Activated T-helper 1 cell treated with anti-CD3 and anti-CD28 coated beads, Interleukin-12 subunit alpha, Interleukin-12 subunit beta, Interleukin-2, Interleukin-4 antibody, amounts not matched to agents 30 ng/mL and 10 ng/mL and 1 ng/mL, durations not matched to agents 14 hours and 24 hours and 36 hours (primary cell): ENCODE measurements at regions of chr2 and their contacts with region 1.

Region 1: GRCh38 chr2:130342533-130343275 is at the start of gene IMP4:
- DNase-seq: peak; percentile 95
- H3K4me3 Mint-ChIP-seq: peak within 1 kb of the TSS; percentile 100
- H3K27ac Mint-ChIP-seq: peak within 1 kb of the TSS; percentile 97
- H3K4me1 Mint-ChIP-seq: peaks cover 21% of the 10 kb centered on the region
- H3K27me3 Mint-ChIP-seq: no peaks in the 10 kb centered on the region
- total RNA-seq, gene IMP4: 169 and 184 TPM in 2 replicates

Region 2: GRCh38 chr2:129866391-129866790 is 476.3 kb before region 1 on chr2:
- intact Hi-C with region 1: no loop called
- DNase-seq: no peak
- H3K4me3 Mint-ChIP-seq: no peak overlapping the region
- H3K27ac Mint-ChIP-seq: no peak overlapping the region
- H3K4me1 Mint-ChIP-seq: no peaks in the 10 kb centered on the region
- H3K27me3 Mint-ChIP-seq: no peaks in the 10 kb centered on the region

Region 3: GRCh38 chr2:129877289-129877779 is 465.4 kb before region 1 on chr2:
- intact Hi-C with region 1: loop called (anchors 1 kb)
- DNase-seq: peak; percentile 53
- H3K4me3 Mint-ChIP-seq: peak overlapping the region; percentile 88
- H3K27ac Mint-ChIP-seq: peak overlapping the region; percentile 74
- H3K4me1 Mint-ChIP-seq: peaks cover 9% of the 10 kb centered on the region
- H3K27me3 Mint-ChIP-seq: peaks cover 4% of the 10 kb centered on the region

Region 4: DNA sequence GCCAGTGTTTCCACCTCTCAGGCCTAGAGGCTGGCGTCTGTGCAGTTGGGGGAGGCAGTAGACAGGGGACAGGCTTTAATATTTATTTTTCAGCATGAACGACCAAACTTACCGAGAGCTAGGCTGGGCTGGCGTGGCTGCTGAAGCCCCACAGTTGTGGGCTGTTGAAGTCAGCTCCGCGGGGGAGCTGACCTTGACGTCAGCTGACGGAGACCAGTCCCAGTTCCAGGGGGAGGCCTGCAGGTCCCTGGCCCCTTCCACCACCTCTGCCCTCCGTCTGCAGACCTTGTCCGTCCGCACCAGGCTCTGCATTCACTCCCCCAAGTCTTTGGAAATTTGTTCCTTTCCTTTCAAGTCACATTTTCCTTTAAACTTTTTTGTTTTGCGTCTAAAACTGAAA is 111.0 kb before region 1 on chr2:
- intact Hi-C with region 1: loop called (anchors 1 kb)
- DNase-seq: no peak
- H3K4me3 Mint-ChIP-seq: no peak overlapping the region
- H3K27ac Mint-ChIP-seq: no peak overlapping the region
- H3K4me1 Mint-ChIP-seq: no peaks in the 10 kb centered on the region
- H3K27me3 Mint-ChIP-seq: peaks cover 3% of the 10 kb centered on the region

Region 5: DNA sequence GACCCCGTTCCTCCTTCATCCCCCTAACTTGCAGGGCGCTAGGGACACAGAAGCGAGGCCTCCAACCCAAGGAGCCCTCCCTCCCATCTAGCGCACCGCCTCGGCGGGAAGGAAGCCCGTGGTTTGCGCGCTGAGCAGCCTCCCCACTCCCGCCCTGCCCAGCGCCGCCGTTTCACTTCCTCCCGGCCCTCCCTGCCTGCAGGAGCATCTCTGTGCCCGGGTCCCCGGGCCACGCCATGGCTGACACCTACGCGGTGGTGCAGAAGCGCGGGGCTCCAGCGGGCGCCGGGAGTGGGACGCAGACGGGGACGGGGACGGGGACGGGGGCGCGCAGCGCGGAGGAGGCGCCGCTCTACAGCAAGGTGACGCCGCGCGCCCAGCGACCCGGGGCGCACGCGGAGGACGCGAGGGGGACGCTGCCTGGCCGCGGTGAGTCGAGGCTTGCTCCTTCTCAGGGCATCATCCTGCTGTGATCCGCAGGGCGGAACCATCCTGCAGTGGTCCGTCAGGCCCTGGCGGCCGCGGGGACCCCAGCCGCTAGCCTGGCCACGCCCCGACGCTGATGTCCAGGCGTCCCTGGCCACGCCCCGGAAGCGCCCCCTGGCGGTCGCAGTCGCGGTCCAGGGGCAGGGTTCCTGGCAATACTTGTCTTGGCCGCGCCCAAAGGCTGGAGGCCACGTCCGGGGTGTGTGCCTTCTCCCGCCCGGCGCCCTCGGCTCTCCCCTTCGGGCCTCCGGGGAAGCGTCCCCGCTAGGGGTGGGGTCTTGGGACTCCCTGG is 29.5 kb after region 1 on chr2:
- intact Hi-C with region 1: loop called (anchors 1 kb)
- DNase-seq: peak; percentile 78
- H3K4me3 Mint-ChIP-seq: peak overlapping the region; percentile 96
- H3K27ac Mint-ChIP-seq: peak overlapping the region; percentile 96
- H3K4me1 Mint-ChIP-seq: peaks cover 59% of the 10 kb centered on the region
- H3K27me3 Mint-ChIP-seq: peaks cover 4% of the 10 kb centered on the region

Region 6: DNA sequence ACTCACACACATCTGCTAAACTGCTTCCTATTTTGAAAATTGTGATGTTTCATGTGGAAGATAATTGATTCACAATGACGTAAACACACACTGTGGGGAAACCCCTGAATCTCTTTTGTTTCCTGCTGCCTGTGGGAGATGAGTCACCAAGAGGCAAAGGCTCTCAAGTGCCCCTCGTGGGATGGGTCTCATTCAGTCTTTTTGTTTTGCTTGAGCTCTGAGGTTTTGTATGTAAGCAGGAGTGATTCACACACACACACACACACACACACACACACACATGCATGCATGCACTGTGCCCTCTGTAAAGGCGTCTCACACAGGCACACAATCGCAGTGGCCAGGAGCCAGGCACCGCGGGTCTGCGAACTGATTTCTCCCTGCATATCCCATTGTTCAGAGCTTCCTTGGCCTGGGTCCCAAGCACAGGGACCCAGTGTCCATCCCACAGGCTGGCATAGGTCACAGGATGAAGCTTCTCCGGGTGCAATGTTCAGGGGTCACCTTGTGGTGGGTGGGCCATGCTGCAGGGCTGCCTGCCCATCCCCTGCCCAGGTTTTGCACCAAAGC is 481.9 kb after region 1 on chr2:
- intact Hi-C with region 1: loop called (anchors 1 kb)
- DNase-seq: peak; percentile 72
- H3K4me3 Mint-ChIP-seq: peak overlapping the region; percentile 63
- H3K27ac Mint-ChIP-seq: peak overlapping the region; percentile 89
- H3K4me1 Mint-ChIP-seq: peaks cover 15% of the 10 kb centered on the region
- H3K27me3 Mint-ChIP-seq: peaks cover 20% of the 10 kb centered on the region

Region 7: GRCh38 chr2:131366643-131367042 is 1023.9 kb after region 1 on chr2:
- intact Hi-C with region 1: no loop called
- DNase-seq: no peak
- H3K4me3 Mint-ChIP-seq: no peak overlapping the region
- H3K27ac Mint-ChIP-seq: no peak overlapping the region
- H3K4me1 Mint-ChIP-seq: peaks cover 12% of the 10 kb centered on the region
- H3K27me3 Mint-ChIP-seq: peaks cover 30% of the 10 kb centered on the region

Region 8: DNA sequence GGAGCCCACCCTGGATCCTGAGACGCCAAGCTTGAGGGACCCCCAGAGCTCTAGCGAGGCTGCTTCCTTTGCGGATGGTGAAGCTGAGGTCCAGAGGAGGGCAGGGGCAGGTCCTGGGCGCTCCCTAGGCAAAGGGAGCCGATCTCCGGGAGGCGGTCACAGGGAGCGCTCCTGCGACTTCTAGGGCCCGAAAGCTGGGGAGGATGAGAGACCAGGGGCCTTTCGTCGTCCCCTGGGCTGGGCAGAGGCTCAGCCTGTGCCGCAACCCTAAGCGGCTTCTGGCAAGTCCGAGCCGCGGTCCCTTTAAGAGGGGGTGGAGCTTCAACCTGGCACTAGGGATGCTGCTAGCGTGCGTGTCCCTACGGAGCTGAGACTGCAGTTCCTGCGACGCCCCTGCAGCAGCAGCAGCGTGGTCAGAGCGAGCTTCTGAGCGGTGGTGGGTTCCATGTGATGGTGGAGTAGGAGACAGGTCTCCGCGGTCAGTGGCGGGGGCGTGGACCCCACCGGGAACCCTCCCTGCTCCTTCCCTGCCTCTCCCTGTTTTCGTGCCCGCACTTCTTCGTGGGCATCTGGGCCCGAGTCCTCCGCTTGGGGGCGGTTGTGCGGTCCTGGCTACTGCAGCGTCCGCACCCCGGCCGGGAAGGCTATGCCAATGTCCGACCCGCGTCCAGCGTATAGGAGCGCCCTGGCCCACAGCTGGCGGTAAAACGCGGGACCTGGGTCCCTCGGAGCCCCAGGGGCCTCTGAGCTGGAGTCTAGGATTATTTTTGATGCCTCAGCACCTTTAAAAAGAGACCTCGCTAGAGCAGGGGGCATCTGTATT is 1339.6 kb after region 1 on chr2:
- intact Hi-C with region 1: loop called (anchors 10 kb)
- DNase-seq: peak; percentile 66
- H3K4me3 Mint-ChIP-seq: peak overlapping the region; percentile 90
- H3K27ac Mint-ChIP-seq: peak overlapping the region; percentile 76
- H3K4me1 Mint-ChIP-seq: peaks cover 42% of the 10 kb centered on the region
- H3K27me3 Mint-ChIP-seq: peaks cover 2% of the 10 kb centered on the region